H1 (cell line): ENCODE measurements at regions of chr2 and their contacts with region 1.

Region 1: DNA sequence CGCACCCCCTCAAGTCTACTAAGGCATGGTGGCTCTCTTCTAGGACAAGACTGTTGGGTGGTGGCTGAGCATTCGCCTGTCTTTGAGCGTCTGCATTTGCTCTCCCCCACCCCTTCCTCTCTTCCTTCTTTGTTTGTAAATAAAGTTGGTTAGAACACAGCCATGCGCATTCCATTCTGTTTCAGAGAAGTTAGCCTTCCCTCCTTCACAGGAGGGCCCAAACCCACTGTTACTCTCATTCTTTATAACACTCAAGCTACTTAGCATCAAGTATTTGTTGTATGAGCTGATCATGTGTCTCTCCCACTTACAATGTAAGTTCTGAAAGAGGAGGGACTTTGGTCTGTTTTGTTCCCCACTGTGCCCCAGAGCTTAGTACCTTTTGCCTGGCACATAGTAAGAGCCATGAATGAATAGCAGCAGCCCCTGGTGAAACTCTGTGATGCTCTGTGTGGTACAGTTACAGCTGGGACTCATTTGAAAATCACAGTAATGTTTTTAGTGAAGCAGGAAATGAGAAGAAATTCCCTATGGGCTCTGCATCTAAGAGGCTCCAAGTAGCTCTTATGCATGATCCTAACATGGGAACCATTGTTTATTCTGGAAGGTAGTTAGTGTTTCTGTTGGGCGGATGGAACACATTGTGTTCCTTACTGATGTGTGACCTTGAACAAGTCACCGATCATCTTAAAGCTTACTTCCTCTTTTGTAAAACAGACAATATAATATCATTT is 7.7 kb downstream of the MGAT5 start:
- DNase-seq: peak in 1 of 2 experiments; percentile 7
- H3K4me3 ChIP-seq: no peak overlapping the region
- H3K27ac ChIP-seq: no peak overlapping the region
- H3K4me1 ChIP-seq: peaks cover 3 to 11% (median 8%) of the 10 kb centered on the region in 4 experiments; a peak in 6 of 7 replicates
- H3K27me3 ChIP-seq: no peaks in the 10 kb centered on the region
- CTCF ChIP-seq: no peak
- EP300 ChIP-seq: no peak
- POLR2A ChIP-seq: no peak
- RAD21 ChIP-seq: no peak

Region 2: DNA sequence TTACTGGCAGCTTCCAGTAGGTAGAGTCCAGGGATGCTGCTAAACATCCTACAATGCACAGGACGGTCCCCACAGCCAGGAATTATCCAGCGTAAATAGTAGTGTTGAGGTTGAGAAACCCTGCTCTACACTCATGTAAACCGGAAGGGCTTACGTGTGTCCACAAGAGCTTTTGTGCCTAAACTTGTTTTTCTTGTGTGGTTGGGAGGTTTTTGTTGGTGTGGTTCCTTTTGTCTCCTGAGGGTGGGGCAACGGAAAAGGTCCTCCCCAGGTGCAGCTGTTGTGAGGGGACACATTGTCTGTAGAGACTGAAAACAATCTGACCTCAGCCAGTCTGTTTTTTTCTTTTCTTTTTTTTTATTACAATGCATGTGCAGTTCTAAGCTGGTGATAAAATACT is 80.4 kb before region 1 on chr2:
- CTCF ChIA-PET with region 1: no interaction called
- POLR2A ChIA-PET with region 1: no interaction called
- DNase-seq: no peak
- H3K4me3 ChIP-seq: no peak overlapping the region
- H3K27ac ChIP-seq: no peak overlapping the region
- H3K4me1 ChIP-seq: peaks cover 2 to 7% (median 6%) of the 10 kb centered on the region in 4 experiments; a peak in 3 of 7 replicates
- H3K27me3 ChIP-seq: no peaks in the 10 kb centered on the region
- CTCF ChIP-seq: no peak
- EP300 ChIP-seq: no peak
- POLR2A ChIP-seq: no peak
- RAD21 ChIP-seq: no peak

Region 3: GRCh38 chr2:134271758-134272157 is 10.2 kb after region 1 on chr2:
- CTCF ChIA-PET with region 1: interaction called, 11 read pairs
- POLR2A ChIA-PET with region 1: no interaction called
- DNase-seq: no peak
- H3K4me3 ChIP-seq: no peak overlapping the region
- H3K27ac ChIP-seq: no peak overlapping the region
- H3K4me1 ChIP-seq: peaks cover 0 to 2% (median 0%) of the 10 kb centered on the region in 4 experiments; a peak in 1 of 7 replicates
- H3K27me3 ChIP-seq: no peaks in the 10 kb centered on the region
- CTCF ChIP-seq: no peak
- EP300 ChIP-seq: no peak
- POLR2A ChIP-seq: no peak
- RAD21 ChIP-seq: no peak